Activated T-helper 1 cell treated with anti-CD3 and anti-CD28 coated beads, Interleukin-12 subunit alpha, Interleukin-12 subunit beta, Interleukin-2, Interleukin-4 antibody, amounts not matched to agents 30 ng/mL and 10 ng/mL and 1 ng/mL, durations not matched to agents 14 hours and 24 hours and 36 hours (primary cell): ENCODE measurements at regions of chr7 and their contacts with region 1.

Region 1: DNA sequence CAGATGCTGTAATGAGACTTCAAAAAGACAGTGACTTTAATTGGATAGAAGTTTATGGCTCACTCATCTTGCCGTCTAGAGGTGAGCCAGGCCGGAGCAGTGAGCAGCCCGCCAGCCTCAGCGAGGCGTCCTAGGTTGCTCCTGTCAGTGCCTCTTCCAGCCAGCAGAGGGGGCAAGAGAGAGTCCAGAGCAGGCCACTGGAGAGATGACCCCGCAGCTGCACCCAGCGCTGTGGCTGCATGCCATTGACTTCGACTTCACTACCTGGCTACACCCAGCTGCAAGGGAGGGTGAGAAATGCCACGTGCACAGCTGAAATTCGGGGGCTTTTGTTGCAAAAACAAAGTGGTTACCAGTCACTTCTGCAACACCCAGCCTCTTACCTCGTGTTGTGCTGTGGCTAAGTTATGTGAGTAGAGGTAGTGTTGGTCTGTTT is 26.5 kb downstream of the NUB1 start:
- DNase-seq: peak; percentile 64
- H3K4me3 Mint-ChIP-seq: no peak overlapping the region
- H3K27ac Mint-ChIP-seq: no peak overlapping the region
- H3K4me1 Mint-ChIP-seq: peaks cover 7% of the 10 kb centered on the region
- H3K27me3 Mint-ChIP-seq: no peaks in the 10 kb centered on the region

Region 2: DNA sequence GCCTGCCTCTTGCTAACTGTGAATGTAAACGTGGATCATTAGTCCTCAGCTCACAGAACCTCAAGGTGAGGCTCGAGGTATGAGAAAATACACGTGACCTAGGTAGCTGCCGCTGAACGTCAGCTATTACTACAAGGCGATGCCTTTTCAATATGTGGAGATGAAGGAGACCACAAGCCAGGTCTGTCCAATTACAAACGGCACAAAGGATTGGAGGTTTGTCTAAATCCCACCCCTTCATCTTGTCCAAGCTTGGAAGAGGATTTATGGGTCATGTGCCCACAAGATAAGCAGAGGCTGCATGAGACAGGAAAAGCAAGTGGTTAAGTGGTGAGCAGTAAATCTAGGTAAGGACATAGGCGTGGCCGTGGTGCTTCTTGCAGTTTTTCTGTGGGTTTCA is 161.2 kb before region 1 on chr7:
- intact Hi-C with region 1: no loop called
- DNase-seq: no peak
- H3K4me3 Mint-ChIP-seq: no peak overlapping the region
- H3K27ac Mint-ChIP-seq: no peak overlapping the region
- H3K4me1 Mint-ChIP-seq: peaks cover 20% of the 10 kb centered on the region
- H3K27me3 Mint-ChIP-seq: peaks cover 12% of the 10 kb centered on the region

Region 3: GRCh38 chr7:151408839-151409666 is 40.9 kb after region 1 on chr7:
- intact Hi-C with region 1: loop called (anchors 5 kb)
- DNase-seq: peak; percentile 17
- H3K4me3 Mint-ChIP-seq: peak overlapping the region; percentile 71
- H3K27ac Mint-ChIP-seq: no peak overlapping the region
- H3K4me1 Mint-ChIP-seq: peaks cover 17% of the 10 kb centered on the region
- H3K27me3 Mint-ChIP-seq: peaks cover 44% of the 10 kb centered on the region

Region 4: GRCh38 chr7:151432791-151433521 is 64.8 kb after region 1 on chr7:
- intact Hi-C with region 1: loop called (anchors 1 kb)
- DNase-seq: peak; percentile 38
- H3K4me3 Mint-ChIP-seq: no peak overlapping the region
- H3K27ac Mint-ChIP-seq: peak overlapping the region; percentile 71
- H3K4me1 Mint-ChIP-seq: peaks cover 24% of the 10 kb centered on the region
- H3K27me3 Mint-ChIP-seq: peaks cover 10% of the 10 kb centered on the region